Motor neuron (in vitro differentiated cells): ENCODE measurements at regions of chr20 and their contacts with region 1.

Region 1: GRCh38 chr20:2172305-2173175 is 70.9 kb downstream of the STK35 start:
- ATAC-seq: peak; percentile 75 to 94 (median 86)
- H3K4me3 ChIP-seq: no peak overlapping the region
- H3K27ac ChIP-seq: no peak overlapping the region
- H3K4me1 ChIP-seq: no peaks in the 10 kb centered on the region

Region 2: DNA sequence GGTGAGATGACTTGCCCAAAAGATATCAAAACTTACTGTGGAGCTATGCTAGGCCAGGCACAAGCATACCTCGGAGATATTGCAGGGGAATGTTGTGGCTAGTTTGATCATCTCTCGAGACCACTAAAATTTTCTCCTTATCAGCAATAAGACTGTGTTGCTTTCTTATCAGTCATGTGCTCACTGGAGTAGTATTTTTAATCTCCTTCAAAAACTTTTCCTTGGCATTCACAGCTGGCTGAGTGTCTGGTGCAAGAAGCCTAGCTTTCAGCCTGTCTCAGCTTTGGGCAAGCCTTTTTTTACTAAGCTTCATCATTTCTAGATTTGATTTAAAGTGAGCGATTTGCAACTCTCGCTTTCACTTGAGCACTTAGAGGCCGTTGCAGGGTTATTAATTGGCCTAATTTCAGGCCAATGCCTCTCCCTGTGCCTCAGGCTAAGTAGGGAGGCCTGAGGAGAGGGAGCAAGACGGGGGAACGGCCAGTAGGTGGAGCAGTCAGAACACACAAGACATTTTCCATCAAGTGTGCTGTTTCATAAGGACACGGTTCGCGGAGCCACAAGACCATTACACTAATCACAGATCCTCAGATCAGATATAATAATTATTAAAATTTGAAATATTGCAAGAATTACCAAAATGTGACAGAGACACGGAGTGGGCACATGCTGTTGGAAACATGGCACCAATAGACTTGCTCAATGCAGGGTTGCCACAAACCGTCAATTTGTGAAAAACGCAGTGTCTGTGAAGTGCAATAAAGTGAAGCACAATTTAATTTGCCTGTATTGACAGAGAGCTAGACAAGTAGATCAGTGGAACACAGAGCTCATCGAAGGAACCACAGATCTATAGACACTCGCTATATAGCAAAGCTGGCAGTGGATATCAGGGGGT is 408.2 kb before region 1 on chr20:
- in situ Hi-C with region 1: loop called in 2 of 9 experiments (anchors 25 kb)
- ATAC-seq: peak; percentile 94 to 99 (median 98)
- H3K4me3 ChIP-seq: no peak overlapping the region
- H3K27ac ChIP-seq: no peak overlapping the region
- H3K4me1 ChIP-seq: no peaks in the 10 kb centered on the region

Region 3: DNA sequence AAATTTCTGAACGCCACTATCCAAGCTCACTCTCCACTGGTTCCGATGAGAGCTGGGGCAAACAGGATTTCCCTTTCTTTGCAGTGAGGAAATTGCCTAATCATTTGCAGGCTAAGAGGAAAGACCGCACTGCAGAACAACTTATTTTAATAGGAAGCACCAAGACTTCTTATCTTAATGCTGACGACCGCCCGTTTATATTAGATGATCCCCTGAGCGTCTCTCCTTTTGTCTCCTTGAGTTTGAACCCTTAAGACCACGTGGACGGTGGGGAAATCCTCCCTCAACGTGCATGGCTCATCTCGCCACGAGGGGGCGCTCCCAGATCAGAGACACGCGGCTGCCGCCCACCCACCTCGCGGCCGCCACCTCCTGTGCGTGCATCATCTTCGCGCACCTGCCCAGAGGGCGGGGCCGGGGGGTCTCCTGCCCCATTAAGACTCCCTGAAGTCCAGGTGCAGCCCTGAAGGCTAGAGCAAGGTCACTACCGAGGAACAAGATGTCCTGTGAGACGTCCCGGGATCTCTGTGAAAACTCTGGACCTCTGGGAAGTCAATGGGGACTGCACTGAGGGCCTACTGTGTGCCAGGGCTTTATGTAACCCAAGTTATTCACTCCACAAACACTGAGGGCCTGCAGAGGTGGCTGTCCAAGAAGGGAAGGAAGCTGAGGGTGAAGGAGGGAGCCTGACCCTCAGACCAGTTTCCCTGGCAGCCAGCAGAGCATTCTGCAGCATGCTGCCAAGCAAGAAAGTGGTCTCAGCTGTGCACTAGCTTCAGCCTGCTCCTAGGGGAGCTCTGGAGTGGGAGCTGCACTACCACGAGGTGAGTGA is 206.8 kb before region 1 on chr20:
- in situ Hi-C with region 1: loop called in 1 of 9 experiments (anchors 25 kb)
- ATAC-seq: peak; percentile 54 to 92 (median 76)
- H3K4me3 ChIP-seq: no peak overlapping the region
- H3K27ac ChIP-seq: no peak overlapping the region
- H3K4me1 ChIP-seq: peaks cover 0 to 6% of the 10 kb centered on the region in 2 donors

Region 4: DNA sequence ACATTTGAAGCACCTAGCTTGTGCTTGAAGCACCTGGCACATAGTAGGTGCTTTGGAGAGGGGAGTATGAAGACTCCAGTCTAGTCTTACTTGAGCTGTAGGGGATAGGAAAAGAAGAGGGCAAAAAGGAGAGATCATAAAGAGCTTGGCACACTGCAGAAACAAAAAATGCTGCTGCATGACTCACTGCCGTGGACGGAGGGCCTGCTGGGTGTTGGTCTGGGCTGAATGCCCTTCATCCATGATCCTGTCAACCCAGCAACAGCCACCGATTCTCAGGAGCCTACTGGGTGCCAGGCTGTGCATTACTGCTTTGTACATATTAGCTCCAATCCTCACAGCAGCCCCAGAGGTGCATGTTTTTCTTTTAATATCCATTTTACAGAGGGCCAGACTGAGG is 184.7 kb before region 1 on chr20:
- in situ Hi-C with region 1: loop called in 3 of 9 experiments (anchors 25 kb)
- ATAC-seq: peak in 1 of 8 experiments; percentile 72
- H3K4me3 ChIP-seq: no peak overlapping the region
- H3K27ac ChIP-seq: no peak overlapping the region
- H3K4me1 ChIP-seq: no peaks in the 10 kb centered on the region